ENCODE measurements at regions of chr1 and their contacts with region 1.

Region 1: DNA sequence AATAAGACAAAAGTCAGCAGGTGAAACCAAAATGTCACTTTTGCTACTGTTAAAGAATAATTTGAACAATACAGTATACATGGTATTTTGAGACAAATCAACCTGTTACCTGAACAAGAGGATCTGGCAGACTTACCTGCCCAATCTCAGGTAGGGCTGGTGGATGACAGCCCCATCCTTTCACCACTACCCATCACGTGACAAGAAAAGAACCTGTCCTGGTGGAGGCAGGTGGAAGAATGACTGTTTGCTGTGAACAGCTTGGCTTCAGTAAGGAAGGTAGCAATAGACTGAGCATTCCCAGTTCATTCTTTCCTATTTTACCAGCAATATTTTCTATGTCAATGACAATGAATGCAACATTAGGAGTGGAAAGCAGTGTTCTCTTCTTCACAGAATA is 349.5 kb downstream of the GPATCH2 start:
- DNase-seq: no peak
- ATAC-seq: no peak

Region 2: DNA sequence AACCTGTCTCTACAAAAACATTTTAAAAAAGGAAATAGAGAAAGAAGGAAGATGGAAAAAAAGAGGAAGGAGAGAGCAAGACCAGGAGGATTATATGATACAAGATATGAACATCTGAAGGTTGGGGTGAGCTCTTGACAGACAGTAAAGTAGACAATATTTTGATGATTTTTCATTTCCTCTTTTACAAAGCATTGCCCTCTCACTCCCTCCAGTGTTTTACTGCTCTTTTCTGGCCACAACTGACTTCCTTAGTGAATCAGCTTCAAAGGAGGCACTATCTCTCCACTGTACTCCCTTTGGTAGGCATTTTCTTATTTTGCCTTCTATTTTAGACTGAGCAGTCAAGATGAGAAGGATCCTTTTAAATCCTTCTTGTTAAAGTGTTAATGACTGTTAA is 1417.6 kb before region 1 on chr1:
- intact Hi-C with region 1: loop called (anchors 10 kb)
- DNase-seq: no peak
- ATAC-seq: no peak

Region 3: DNA sequence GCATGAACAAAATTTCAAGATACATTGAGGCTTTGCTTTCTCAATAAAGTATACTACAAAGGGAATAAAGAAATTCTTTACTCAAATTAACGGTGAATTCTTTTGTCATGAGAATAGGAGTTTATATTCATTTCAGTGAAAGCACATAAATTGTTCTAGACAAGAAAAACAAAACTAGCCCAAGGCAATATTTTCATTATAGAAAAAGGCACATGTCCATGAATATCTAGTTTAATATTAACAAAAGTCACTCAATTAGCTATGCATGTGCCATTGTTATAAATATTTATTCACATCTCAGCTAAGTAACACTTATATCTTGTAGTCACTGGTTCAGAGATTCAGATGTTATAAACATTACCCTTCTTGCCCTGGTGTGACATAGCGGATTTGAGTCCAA is 19.7 kb before region 1 on chr1:
- intact Hi-C with region 1: no loop called
- DNase-seq: no peak
- ATAC-seq: no peak